Panc1 (cell line): ENCODE measurements at regions of chr13 and their contacts with region 1.

Region 1: GRCh38 chr13:65240773-65241172 is 1989.4 kb downstream of the PCDH9 start:
- DNase-seq: no peak
- ATAC-seq: no peak
- H3K4me3 ChIP-seq: no peak overlapping the region
- H3K27ac ChIP-seq: no peak overlapping the region
- H3K4me1 ChIP-seq: no peaks in the 10 kb centered on the region
- H3K27me3 ChIP-seq: no peaks in the 10 kb centered on the region
- CTCF ChIP-seq: no peak

Region 2: GRCh38 chr13:63643543-63643942 is 1597.2 kb before region 1 on chr13:
- CTCF ChIA-PET with region 1: no interaction called
- POLR2A ChIA-PET with region 1: no interaction called
- in situ Hi-C with region 1: no loop called
- intact Hi-C with region 1: no loop called
- DNase-seq: no peak
- ATAC-seq: no peak
- H3K4me3 ChIP-seq: no peak overlapping the region
- H3K27ac ChIP-seq: no peak overlapping the region
- H3K4me1 ChIP-seq: no peaks in the 10 kb centered on the region; the same call in 1 of the 2 replicates
- H3K27me3 ChIP-seq: no peaks in the 10 kb centered on the region
- CTCF ChIP-seq: no peak

Region 3: DNA sequence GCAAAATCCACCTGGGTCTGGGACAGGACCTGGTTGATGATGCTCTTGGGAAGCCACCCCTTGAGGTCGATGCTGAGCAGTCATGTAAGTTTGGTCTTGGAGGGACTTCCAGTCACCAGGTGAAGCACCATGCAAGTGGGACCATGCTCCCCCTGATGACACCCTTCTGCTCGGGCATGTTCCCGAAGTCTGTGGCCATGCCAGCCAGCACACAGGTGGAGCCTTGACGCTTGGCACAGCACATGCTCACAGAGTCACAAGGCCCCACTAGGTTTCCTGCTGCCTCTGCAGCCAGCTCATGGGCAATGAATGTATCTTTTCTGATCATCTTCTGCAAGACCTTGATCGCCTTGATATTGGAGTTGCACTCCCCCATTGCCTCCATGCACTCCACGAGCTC is 69.1 kb after region 1 on chr13:
- CTCF ChIA-PET with region 1: no interaction called
- POLR2A ChIA-PET with region 1: no interaction called
- in situ Hi-C with region 1: no loop called
- intact Hi-C with region 1: loop called (anchors 10 kb)
- DNase-seq: no peak
- ATAC-seq: no peak
- H3K4me3 ChIP-seq: no peak overlapping the region
- H3K27ac ChIP-seq: no peak overlapping the region
- H3K4me1 ChIP-seq: no peaks in the 10 kb centered on the region
- H3K27me3 ChIP-seq: no peaks in the 10 kb centered on the region
- CTCF ChIP-seq: no peak